Naive thymus-derived CD8-positive, alpha-beta T cell (primary cell): ENCODE measurements at regions of chr16 and their contacts with region 1.

Region 1: GRCh38 chr16:31487720-31488467 is 5.0 kb downstream of the SLC5A2 start:
- DNase-seq: peak; percentile 53 to 88 (median 76)
- ATAC-seq: peak; percentile 88 to 90
- H3K4me3 Mint-ChIP-seq: peak overlapping the region; percentile 88 to 95 (median 92)
- H3K27ac Mint-ChIP-seq: peak overlapping the region; percentile 46 to 90 (median 86)
- H3K4me1 Mint-ChIP-seq: peaks cover 2 to 24% (median 18%) of the 10 kb centered on the region in 4 donors
- H3K27me3 Mint-ChIP-seq: no peaks in the 10 kb centered on the region

Region 2: GRCh38 chr16:31395647-31396046 is 92.2 kb before region 1 on chr16:
- POLR2A ChIA-PET with region 1: no interaction called
- DNase-seq: no peak
- ATAC-seq: no peak
- H3K4me3 Mint-ChIP-seq: no peak overlapping the region
- H3K27ac Mint-ChIP-seq: no peak overlapping the region
- H3K4me1 Mint-ChIP-seq: peaks cover 0 to 22% (median 14%) of the 10 kb centered on the region in 4 donors
- H3K27me3 Mint-ChIP-seq: peaks cover 0 to 3% (median 0%) of the 10 kb centered on the region in 5 donors

Region 3: DNA sequence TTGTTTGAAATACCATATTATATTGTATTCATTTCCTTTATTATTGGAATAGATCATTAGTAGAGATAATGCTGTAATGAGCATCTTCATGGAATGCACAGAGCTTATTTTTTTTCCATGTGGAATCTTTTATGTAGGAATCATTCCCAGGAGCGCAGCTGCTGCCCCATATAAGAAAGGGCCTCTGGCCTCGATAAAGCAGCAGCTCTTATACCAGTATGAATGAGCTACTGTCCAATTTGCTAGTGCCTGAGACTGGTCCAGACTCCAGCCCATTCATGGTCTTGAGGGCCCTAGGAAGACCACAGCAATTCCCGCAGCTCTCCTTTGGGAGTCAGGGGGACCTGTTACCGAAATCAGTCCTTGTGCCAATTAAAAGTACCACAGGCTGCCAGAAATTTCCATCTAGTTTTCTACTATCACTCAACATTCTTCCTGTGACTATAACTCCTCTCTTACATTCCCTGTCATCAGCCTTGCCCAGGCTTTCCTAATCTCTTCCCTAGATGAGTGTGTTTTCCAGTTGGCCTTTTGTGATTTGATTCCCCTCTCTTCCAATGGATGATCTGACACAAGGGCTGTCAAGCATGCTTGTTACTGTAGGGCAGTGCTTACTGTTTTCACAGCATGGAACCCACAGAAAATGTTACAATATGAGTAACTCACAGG is 47.2 kb before region 1 on chr16:
- POLR2A ChIA-PET with region 1: no interaction called
- DNase-seq: no peak
- ATAC-seq: no peak
- H3K4me3 Mint-ChIP-seq: peak overlapping the region in 3 of 10 donors; percentile 15 to 86 (median 47)
- H3K27ac Mint-ChIP-seq: no peak overlapping the region
- H3K4me1 Mint-ChIP-seq: peaks cover 8 to 15% (median 11%) of the 10 kb centered on the region in 4 donors
- H3K27me3 Mint-ChIP-seq: no peaks in the 10 kb centered on the region

Region 4: DNA sequence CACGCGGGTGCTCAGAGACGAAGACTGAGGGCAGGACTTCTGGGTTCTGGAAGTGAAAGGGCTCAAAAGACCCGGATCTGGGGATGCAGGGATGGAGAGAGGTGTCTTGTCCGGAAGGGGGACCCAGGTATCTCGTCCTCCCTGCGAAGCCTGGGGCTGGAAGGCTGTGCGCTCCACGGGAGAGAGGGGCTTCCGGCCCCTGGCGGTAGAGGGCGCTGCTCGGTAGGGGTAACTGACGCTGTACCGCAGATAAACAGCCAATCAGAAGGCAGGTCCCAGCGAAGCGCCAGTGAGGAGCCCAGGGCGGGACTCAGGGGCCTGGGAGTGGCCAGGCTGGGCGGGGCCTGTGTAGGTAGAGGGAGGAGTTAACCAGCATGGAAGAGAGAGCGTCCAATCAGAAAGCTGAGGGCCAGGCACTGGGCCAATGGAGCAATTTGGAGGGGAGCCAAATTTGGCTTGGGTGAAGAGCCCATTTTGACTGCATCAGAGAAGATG is 15.1 kb before region 1 on chr16:
- POLR2A ChIA-PET with region 1: interaction called, 67 read pairs
- DNase-seq: peak in 5 of 10 donors; percentile 20 to 63 (median 33)
- ATAC-seq: peak in 1 of 2 donors; percentile 38
- H3K4me3 Mint-ChIP-seq: peak overlapping the region in 9 of 10 donors; percentile 62 to 81 (median 77)
- H3K27ac Mint-ChIP-seq: peak overlapping the region in 3 of 10 donors; percentile 9 to 71 (median 61)
- H3K4me1 Mint-ChIP-seq: peaks cover 12 to 36% (median 25%) of the 10 kb centered on the region in 4 donors
- H3K27me3 Mint-ChIP-seq: peaks cover 1 to 19% (median 10%) of the 10 kb centered on the region in 5 donors